ENCODE measurements at regions of chr6 and their contacts with region 1.

Region 1: GRCh38 chr6:36160147-36160760 is 29.9 kb downstream of the MAPK13 start:
- DNase-seq: no peak
- H3K4me3 ChIP-seq: no peak overlapping the region
- H3K27ac ChIP-seq: no peak overlapping the region
- H3K27me3 ChIP-seq: peaks cover 4% of the 10 kb centered on the region
- CTCF ChIP-seq: no peak

Region 2: DNA sequence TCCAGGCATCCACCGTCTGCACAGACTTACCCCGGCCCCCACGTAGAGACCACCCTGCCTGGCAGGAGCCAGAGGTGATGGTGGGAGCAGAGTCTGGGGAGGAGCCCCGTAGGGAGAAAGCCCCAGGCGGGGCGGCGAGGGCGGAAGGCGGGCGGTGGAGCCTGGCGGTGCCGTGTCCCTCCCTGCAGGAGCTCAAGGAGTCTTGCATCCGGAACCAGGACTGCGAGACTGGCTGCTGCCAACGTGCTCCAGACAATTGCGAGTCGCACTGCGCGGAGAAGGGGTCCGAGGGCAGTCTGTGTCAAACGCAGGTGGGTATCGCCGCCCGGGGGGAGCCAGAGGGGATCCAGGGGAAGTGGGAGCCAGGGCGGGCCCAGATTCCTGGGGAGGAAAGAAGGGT is 373.4 kb before region 1 on chr6:
- CTCF ChIA-PET with region 1: no interaction called
- POLR2A ChIA-PET with region 1: interaction called, 10 read pairs
- DNase-seq: no peak
- H3K4me3 ChIP-seq: no peak overlapping the region
- H3K27ac ChIP-seq: no peak overlapping the region
- H3K27me3 ChIP-seq: peaks cover 54% of the 10 kb centered on the region
- CTCF ChIP-seq: no peak

Region 3: GRCh38 chr6:36123257-36124139 is 36.8 kb before region 1 on chr6:
- CTCF ChIA-PET with region 1: interaction called, 4 read pairs
- POLR2A ChIA-PET with region 1: interaction called, 12 read pairs
- DNase-seq: peak; percentile 33
- H3K4me3 ChIP-seq: no peak overlapping the region
- H3K27ac ChIP-seq: no peak overlapping the region
- H3K27me3 ChIP-seq: no peaks in the 10 kb centered on the region
- CTCF ChIP-seq: peak; percentile 80

Region 4: DNA sequence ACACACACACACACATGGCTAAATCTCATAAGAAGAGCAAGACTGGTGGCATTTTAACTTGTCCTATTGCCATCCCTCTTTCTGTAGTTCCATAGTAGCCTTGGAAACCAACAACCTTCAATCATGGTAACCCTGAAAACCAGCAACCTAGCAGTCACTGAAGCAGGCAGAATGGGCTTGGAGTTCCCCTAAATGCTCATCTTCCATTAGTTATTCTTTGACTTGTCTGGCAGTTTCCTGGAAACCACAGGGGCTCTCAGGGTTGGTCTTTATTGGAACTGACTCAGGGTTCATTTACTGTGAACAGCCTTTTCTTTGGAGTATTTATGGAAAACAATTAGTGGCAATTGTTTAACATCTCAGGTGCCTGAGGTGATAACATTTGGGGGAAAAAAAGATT is 16.9 kb after region 1 on chr6:
- CTCF ChIA-PET with region 1: no interaction called
- POLR2A ChIA-PET with region 1: no interaction called
- DNase-seq: no peak
- H3K4me3 ChIP-seq: no peak overlapping the region
- H3K27ac ChIP-seq: no peak overlapping the region
- H3K27me3 ChIP-seq: peaks cover 8% of the 10 kb centered on the region
- CTCF ChIP-seq: no peak

Region 5: DNA sequence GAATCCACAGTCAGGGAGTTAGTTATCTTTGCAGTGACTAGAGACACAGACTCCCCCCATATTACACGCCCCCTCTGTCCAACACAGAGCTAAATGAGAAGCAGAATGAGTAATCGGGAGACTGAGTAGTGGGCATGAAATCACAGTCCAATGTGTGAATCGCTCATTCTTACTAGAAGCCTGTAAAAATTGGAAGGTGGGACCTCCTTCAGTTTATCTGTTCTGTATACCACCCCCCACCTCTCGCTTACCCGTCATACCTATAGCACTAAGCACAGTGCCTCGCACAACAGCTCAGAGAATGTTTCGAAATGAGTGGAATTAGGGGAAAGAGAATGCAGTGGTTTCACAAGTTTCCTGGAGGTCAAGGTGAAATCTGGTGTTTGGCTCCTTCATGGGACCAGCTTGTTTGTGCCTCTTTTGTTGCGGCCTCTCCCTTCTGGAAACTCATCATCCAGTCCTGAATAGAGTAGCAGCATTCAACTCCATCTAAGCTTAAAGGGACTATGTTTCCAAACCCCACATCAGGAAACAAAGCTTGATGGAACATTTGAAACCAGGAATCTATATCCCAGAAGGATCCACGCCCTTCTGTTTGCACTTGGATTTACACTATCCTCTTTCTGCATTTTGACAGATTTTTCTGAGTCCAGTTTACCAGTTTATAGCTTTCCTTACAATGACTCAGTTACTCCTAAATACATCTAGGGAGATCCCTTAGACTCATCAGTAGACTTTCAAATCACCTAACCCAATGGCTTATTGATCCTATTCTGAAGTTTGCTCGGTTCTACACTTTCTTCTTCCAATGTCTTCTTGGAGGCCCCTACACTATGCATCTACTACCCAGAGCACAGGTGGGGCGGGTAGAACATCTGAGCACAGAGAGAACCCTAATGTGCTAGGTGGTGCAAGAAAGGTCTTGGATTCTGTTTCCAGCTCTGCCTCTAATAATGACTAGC is 950.5 kb after region 1 on chr6:
- CTCF ChIA-PET with region 1: no interaction called
- POLR2A ChIA-PET with region 1: no interaction called
- DNase-seq: no peak
- H3K4me3 ChIP-seq: no peak overlapping the region
- H3K27ac ChIP-seq: no peak overlapping the region
- H3K27me3 ChIP-seq: no peaks in the 10 kb centered on the region
- CTCF ChIP-seq: no peak